GM13976 (cell line): ENCODE measurements at regions of chr3 and their contacts with region 1.

Region 1: GRCh38 chr3:187739561-187740332 is 5.5 kb downstream of the BCL6 start:
- DNase-seq: peak; percentile 81
- CTCF ChIP-seq: peak; percentile 96

Region 2: DNA sequence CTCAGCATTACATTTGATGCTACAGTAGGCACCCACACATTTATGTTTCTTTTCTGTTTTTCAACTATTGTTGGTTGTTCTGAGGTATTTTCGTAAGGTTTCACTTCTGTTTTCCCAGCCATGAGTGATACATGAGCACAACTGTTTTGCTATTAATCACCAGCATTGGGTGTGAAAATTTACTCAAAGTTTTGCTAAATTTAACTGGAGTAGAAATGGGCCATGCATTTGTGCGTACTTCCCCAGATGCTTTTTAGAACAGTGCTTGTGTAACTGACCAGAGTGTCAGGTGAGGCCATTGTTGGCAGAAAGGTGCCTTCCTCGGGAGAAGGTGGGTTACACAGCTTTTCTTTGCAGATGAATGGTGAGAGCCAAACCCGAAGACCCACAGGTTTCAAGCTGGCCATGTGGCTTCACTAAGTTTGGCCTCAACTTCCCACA is 739.0 kb before region 1 on chr3:
- in situ Hi-C with region 1: no loop called
- DNase-seq: peak; percentile 71
- CTCF ChIP-seq: no peak

Region 3: GRCh38 chr3:187902041-187902471 is 162.3 kb after region 1 on chr3:
- in situ Hi-C with region 1: no loop called
- DNase-seq: peak; percentile 18
- CTCF ChIP-seq: no peak

Region 4: GRCh38 chr3:188954590-188955208 is 1215.0 kb after region 1 on chr3:
- in situ Hi-C with region 1: loop called (anchors 5 kb)
- DNase-seq: peak; percentile 64
- CTCF ChIP-seq: peak; percentile 86